Common myeloid progenitor, CD34-positive (primary cell): ENCODE measurements at regions of chr18 and their contacts with region 1.

Region 1: DNA sequence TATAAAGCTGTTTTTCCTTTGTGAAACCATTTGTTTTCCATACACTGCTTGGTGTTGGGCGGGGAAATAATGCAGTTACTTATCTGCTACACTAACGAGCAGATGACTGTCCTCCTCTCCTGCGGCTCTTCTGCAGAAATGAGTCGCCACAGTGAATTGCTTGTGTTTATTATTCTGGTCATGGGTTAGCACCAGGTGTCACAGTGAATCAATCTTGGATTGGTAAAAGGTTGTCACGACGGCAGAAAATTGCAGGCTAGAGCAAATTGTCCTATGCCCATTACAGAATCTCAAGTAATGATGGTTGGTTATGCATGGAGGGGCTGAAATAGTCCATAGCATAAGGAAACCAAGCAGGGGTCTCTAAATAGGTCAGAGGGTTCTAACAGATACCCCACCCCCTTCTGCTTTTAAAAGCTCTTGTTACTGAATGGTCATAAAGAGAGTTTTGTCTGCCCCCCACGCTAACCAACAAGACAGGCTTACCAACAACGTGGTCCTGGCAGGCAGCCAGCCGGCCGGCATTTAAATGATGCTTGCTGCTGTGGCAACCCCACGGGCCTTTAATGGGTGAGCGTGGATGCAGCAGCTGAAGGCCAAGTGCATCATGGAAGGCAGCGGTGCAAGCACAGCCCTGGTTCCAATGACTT is 29.5 kb downstream of the RAB31 start:
- DNase-seq: no peak
- H3K4me3 ChIP-seq: no peak overlapping the region
- H3K27ac ChIP-seq: no peak overlapping the region
- H3K4me1 ChIP-seq: peaks cover 2 to 74% (median 26%) of the 10 kb centered on the region in 4 experiments
- H3K27me3 ChIP-seq: no peaks in the 10 kb centered on the region

Region 2: GRCh38 chr18:9708434-9709303 is 28.9 kb before region 1 on chr18:
- CTCF ChIA-PET with region 1: interaction called, 11 read pairs
- POLR2A ChIA-PET with region 1: no interaction called
- DNase-seq: peak in 2 of 3 donors; percentile 31 to 46
- H3K4me3 ChIP-seq: peak overlapping the region; percentile 45 to 84 (median 72)
- H3K27ac ChIP-seq: peak overlapping the region in 1 of 2 experiments; percentile 16
- H3K4me1 ChIP-seq: peaks cover 20 to 58% (median 38%) of the 10 kb centered on the region in 4 experiments
- H3K27me3 ChIP-seq: peaks cover 0 to 40% (median 13%) of the 10 kb centered on the region in 5 experiments

Region 3: GRCh38 chr18:9814431-9814830 is 76.8 kb after region 1 on chr18:
- CTCF ChIA-PET with region 1: no interaction called
- POLR2A ChIA-PET with region 1: no interaction called
- DNase-seq: no peak
- H3K4me3 ChIP-seq: no peak overlapping the region
- H3K27ac ChIP-seq: no peak overlapping the region
- H3K4me1 ChIP-seq: no peaks in the 10 kb centered on the region
- H3K27me3 ChIP-seq: no peaks in the 10 kb centered on the region